Activated naive CD4-positive, alpha-beta T cell treated with anti-CD3 and anti-CD28 coated beads for 36 hours (primary cell): ENCODE measurements at regions of chr4 and their contacts with region 1.

Region 1: GRCh38 chr4:184762100-184762499 is 28.2 kb upstream of the CENPU start:
- DNase-seq: peak; percentile 56
- H3K4me3 Mint-ChIP-seq: peak overlapping the region; percentile 24
- H3K27ac Mint-ChIP-seq: peak overlapping the region; percentile 83
- H3K4me1 Mint-ChIP-seq: peaks cover 22% of the 10 kb centered on the region
- H3K27me3 Mint-ChIP-seq: no peaks in the 10 kb centered on the region

Region 2: DNA sequence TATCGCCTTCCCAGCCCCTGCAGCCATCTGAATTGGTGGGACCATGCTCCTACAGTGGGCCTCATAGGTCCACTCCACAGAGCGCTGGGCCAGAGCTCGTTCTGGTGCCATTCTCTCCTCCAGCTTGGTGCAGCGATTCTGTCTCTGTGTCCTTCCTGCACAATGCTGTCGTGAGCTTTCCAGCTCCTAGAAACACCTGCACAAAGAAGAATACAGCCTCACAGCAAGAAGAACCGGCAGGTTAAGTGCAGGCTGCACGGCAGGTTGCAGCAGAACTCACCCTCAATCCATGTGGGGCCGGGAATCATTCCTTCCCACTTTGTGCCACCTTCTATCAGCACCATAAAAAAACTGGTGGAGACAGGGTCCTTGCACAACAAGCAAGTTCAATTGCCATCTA is 443.2 kb before region 1 on chr4:
- CTCF ChIA-PET with region 1: no interaction called
- intact Hi-C with region 1: loop called (anchors 1 kb)
- DNase-seq: no peak
- H3K4me3 Mint-ChIP-seq: no peak overlapping the region
- H3K27ac Mint-ChIP-seq: no peak overlapping the region
- H3K4me1 Mint-ChIP-seq: peaks cover 36% of the 10 kb centered on the region
- H3K27me3 Mint-ChIP-seq: peaks cover 2% of the 10 kb centered on the region

Region 3: GRCh38 chr4:184792950-184793555 is 31.0 kb after region 1 on chr4:
- CTCF ChIA-PET with region 1: no interaction called
- intact Hi-C with region 1: loop called (anchors 1 kb)
- DNase-seq: peak; percentile 60
- H3K4me3 Mint-ChIP-seq: no peak overlapping the region
- H3K27ac Mint-ChIP-seq: no peak overlapping the region
- H3K4me1 Mint-ChIP-seq: peaks cover 22% of the 10 kb centered on the region
- H3K27me3 Mint-ChIP-seq: peaks cover 2% of the 10 kb centered on the region

Region 4: DNA sequence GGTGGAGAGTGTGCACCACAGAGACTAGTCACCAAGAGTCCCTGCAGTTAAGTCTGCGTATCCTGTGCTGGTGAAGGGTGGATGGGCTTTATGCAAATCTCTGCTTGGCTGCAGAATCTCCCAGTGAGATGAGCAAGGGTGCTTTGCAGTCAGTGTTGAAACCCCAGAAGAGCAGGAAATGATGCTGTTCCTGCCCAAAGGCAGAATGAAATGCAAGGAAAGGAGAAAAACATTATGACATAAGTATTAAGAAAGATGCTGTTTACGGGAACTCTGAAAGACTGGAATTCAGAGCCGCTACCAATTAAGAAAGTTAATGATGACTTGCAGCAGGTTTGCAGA is 89.1 kb after region 1 on chr4:
- CTCF ChIA-PET with region 1: no interaction called
- intact Hi-C with region 1: loop called (anchors 1 kb)
- DNase-seq: peak; percentile 74
- H3K4me3 Mint-ChIP-seq: no peak overlapping the region
- H3K27ac Mint-ChIP-seq: no peak overlapping the region
- H3K4me1 Mint-ChIP-seq: peaks cover 29% of the 10 kb centered on the region
- H3K27me3 Mint-ChIP-seq: no peaks in the 10 kb centered on the region

Region 5: DNA sequence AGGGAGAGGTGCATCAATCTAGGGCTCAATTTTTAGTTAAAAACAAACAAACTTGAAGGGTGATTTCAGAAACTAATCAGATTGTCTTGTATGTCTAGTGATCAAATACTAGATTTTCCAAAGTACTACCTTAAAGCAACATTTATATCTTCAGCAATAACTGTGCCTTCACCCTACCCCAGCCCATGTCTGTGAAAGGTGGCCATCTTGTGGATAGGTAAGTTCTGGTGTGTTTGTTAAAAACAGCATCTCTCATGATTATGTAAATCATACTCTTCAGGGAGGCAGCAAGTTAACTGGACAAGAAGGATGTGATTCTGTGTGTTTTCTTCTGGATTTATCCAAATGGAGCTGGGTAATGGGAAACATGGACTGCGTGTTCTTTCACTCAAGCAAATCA is 145.1 kb after region 1 on chr4:
- CTCF ChIA-PET with region 1: no interaction called
- intact Hi-C with region 1: loop called (anchors 5 kb)
- DNase-seq: peak; percentile 48
- H3K4me3 Mint-ChIP-seq: no peak overlapping the region
- H3K27ac Mint-ChIP-seq: peak overlapping the region; percentile 14
- H3K4me1 Mint-ChIP-seq: peaks cover 7% of the 10 kb centered on the region
- H3K27me3 Mint-ChIP-seq: no peaks in the 10 kb centered on the region

Region 6: DNA sequence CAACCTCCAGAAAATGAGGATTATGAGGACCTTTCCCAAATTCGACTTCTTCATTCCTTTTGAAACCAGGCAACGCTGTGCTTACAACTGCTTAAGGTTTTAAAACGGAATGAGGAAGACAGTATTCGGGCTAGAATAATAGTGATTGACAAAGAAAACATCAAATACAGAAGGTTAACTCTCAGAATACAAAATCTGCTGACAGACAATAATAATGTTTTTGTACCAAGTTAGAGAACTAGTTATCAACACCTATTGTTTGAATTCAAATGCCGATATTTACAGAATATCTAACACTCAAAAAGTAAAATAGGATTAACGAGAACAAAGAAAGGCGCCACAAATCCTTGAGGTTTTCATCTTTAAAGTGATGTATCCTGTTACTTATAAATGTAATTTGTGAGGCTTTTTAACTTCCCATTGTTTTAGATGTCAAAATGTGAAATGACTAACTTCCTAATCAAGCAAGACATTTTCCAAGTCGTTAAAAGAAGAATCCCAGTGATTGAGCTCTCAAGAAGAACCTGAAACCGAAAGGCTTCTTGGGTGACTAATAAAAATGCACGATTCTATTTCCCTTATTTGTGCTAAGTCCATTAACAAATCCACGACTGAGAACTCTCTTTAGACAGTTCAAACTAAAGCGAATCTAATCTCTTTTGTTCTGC is 931.6 kb after region 1 on chr4:
- CTCF ChIA-PET with region 1: no interaction called
- intact Hi-C with region 1: no loop called
- DNase-seq: no peak
- H3K4me3 Mint-ChIP-seq: no peak overlapping the region
- H3K27ac Mint-ChIP-seq: no peak overlapping the region
- H3K4me1 Mint-ChIP-seq: no peaks in the 10 kb centered on the region
- H3K27me3 Mint-ChIP-seq: peaks cover 12% of the 10 kb centered on the region